ENCODE measurements at regions of chr6 and their contacts with region 1.

Region 1: GRCh38 chr6:593139-593906 is 63.6 kb downstream of the HUS1B start:
- H3K4me3 ChIP-seq: no peak overlapping the region
- H3K27ac ChIP-seq: no peak overlapping the region
- H3K4me1 ChIP-seq: no peaks in the 10 kb centered on the region; the same call in 1 of the 2 replicates
- CTCF ChIP-seq: no peak

Region 2: DNA sequence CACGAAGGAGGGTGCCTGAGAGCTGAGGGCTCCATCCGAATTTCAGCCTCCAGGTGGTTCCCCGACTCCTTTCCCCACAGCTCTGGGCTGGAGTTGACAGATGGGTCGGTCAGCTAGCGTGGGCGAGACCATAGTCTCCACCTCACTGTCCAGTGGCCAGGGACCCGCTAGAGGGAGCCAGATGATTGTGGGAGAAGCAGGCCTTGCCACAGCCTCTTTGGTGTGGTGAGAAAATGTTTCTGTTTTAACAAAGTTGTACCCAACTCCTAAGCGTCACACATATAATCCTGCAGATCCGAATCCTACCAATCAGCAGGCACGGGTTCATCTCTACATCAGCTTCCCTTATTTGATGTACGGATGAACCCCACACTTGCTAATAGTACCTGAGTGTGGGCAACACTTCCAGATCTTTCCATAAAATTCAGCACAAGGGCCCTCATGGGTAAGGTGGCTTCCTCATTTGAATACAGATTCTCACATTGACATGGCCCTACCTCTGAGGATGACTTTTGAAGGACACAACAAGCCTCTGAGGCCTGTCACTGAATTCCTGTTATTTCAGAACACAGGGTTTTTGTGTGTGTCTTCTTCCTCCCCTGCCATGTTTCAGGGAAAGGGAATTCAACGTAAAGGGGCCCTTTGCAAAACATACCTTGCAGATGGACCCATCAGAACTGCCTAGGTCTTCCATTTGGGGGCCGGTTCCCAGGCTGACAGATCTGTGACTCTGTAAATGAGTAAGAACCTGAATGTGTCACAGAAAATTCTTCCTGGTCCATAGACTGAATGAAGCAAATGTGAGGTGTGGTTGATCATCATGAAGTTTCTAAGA is 404.3 kb before region 1 on chr6:
- CTCF ChIA-PET with region 1: interaction called, 35 read pairs
- POLR2A ChIA-PET with region 1: no interaction called
- H3K4me3 ChIP-seq: no peak overlapping the region
- H3K27ac ChIP-seq: no peak overlapping the region
- H3K4me1 ChIP-seq: no peaks in the 10 kb centered on the region
- CTCF ChIP-seq: peak; percentile 94

Region 3: GRCh38 chr6:604579-604978 is 11.3 kb after region 1 on chr6:
- CTCF ChIA-PET with region 1: interaction called, 13 read pairs
- POLR2A ChIA-PET with region 1: no interaction called
- H3K4me3 ChIP-seq: no peak overlapping the region
- H3K27ac ChIP-seq: no peak overlapping the region
- H3K4me1 ChIP-seq: peaks cover 5% of the 10 kb centered on the region; the same call in 1 of the 2 replicates
- CTCF ChIP-seq: no peak

Region 4: DNA sequence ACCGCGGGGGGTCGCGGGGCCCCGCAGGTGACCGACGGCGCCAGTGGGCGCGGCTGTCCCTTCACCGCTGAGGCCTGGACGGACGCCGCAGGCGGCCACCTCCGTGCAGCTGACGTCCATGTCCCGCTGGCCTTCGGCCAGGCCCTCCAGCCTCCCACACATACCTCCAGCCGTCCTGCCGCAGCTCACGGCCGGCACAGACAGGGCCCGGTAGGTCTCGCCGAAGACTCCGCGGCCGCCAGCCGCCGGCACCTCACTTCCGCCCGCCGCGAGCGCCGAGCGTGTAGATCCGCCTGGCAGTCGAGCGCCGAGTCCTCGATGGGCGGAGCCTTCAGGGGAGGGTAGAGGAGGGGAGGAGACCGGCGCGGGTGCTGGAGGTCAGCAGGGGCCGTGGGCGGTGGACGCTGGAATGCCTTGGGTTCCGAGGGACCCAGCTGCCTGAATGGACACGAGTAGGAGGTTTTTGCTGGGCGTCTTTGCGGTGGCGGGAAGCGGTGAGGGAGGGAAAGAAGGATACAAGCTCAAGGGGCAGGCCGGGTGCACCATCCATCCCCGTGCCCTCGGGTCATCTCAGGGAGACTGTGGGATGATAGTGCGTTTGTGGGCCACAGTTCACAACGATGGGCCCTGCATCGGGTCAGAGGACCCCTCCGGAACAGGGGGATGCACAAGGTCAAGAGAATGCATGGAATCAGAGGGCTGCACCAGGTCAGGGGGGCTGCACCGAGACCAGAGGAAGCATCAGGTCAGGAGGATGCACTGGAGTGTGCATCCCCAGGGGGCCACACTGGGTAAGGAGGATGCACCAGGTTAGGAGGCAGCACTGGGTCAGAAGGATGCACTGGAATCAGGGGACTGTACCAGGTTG is 99.8 kb after region 1 on chr6 and contains the start of gene EXOC2:
- CTCF ChIA-PET with region 1: interaction called, 25 read pairs
- POLR2A ChIA-PET with region 1: interaction called, 5 read pairs
- H3K4me3 ChIP-seq: peak within 1 kb of the TSS; percentile 67
- H3K27ac ChIP-seq: peak within 1 kb of the TSS; percentile 92
- H3K4me1 ChIP-seq: peaks cover 11% of the 10 kb centered on the region
- CTCF ChIP-seq: no peak

Region 5: DNA sequence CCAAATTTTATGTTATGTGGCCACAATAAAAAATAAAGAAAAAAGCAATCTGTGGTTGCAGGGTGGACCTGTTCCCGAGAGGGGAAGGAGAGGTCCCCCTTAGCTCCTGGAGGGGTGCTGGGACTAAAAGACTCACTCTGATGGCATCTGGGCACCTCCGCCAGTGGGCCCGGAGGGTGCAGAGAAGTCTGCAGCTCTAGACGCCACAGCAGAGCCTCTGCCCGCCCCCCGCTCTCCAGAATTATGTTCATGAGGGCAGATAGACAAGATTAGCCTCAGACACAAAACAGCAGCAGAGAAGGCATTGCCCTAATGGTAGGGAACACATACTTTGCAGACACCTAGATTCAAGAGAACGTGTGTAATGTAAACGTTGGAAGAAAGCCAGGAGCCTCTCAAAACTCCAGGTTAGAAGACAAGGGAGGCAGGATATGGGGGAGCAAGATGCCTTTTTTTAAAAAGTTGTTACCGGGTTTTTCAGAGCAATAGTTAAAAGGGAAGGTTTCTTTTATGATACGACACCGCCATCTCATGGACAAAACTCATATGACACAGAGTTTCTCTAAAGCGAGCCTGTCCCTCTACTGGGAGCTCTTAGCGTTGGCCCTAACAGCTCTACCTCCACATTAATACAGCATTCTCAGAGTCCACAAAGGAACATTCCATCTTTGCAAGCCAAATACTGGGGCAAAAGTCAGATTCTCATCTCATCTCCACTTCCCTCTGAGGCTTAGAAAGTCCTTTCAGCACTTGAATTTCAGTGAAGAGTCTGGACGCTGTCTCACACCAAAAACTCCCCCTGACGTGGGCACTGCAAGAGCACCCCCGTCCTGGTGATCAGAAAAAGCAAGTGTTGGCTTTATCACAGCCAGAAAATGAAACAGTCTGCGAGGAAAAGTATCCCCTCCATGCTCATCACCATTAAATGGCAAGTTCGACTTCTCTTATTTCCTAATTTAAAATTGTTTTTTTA is 843.3 kb after region 1 on chr6:
- CTCF ChIA-PET with region 1: interaction called, 18 read pairs
- POLR2A ChIA-PET with region 1: no interaction called
- H3K4me3 ChIP-seq: no peak overlapping the region
- H3K27ac ChIP-seq: no peak overlapping the region
- H3K4me1 ChIP-seq: peaks cover 4% of the 10 kb centered on the region
- CTCF ChIP-seq: peak; percentile 82

Measured in HEK293 (cell line).